Activated T-helper 1 cell treated with anti-CD3 and anti-CD28 coated beads, Interleukin-12 subunit alpha, Interleukin-12 subunit beta, Interleukin-2, Interleukin-4 antibody, amounts not matched to agents 30 ng/mL and 10 ng/mL and 1 ng/mL, durations not matched to agents 14 hours and 24 hours and 36 hours (primary cell): ENCODE measurements at regions of chr22 and their contacts with region 1.

Region 1: GRCh38 chr22:33018232-33018864 is 39.8 kb downstream of the SYN3 start:
- DNase-seq: peak; percentile 12
- H3K4me3 Mint-ChIP-seq: no peak overlapping the region
- H3K27ac Mint-ChIP-seq: no peak overlapping the region
- H3K4me1 Mint-ChIP-seq: no peaks in the 10 kb centered on the region
- H3K27me3 Mint-ChIP-seq: no peaks in the 10 kb centered on the region

Region 2: DNA sequence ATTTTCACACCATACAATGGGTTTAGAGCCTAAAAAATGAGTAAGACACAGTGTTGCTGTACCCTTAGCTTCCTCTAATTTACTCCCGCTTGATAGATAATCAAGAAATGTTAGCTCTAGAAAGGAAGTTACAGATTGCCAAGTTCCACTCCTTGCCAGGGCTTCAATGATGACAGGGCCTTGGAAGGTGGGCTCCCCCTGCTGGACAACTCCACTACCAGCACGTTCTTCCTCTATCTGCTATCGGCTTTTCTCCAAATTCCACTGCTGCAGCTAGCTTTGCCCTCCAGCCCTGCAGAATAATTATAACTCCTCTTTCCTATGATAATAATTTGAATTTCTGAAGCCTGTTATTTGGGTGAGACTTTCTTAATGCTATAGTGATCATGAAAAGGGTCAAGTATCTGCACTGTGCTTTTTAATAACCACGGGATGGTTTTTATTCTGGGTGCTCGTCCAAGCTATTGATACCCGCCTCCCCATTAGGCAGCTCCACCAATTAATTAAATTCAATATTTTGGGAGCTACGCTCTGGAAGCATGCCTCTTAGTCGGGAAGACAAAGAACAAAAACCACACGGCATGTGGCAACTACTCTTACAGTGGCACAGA is 30.9 kb after region 1 on chr22:
- intact Hi-C with region 1: loop called (anchors 1 kb)
- DNase-seq: peak; percentile 30
- H3K4me3 Mint-ChIP-seq: no peak overlapping the region
- H3K27ac Mint-ChIP-seq: no peak overlapping the region
- H3K4me1 Mint-ChIP-seq: no peaks in the 10 kb centered on the region
- H3K27me3 Mint-ChIP-seq: peaks cover 8% of the 10 kb centered on the region